CD8-positive, alpha-beta T cell (primary cell): ENCODE measurements at regions of chr2 and their contacts with region 1.

Region 1: GRCh38 chr2:12326449-12327190 is 390.1 kb upstream of the TRIB2 start:
- DNase-seq: peak in 3 of 9 experiments; percentile 10 to 46 (median 20)
- ATAC-seq: no peak
- H3K4me3 ChIP-seq: no peak overlapping the region
- H3K4me3 Mint-ChIP-seq: no peak overlapping the region
- H3K27ac ChIP-seq: no peak overlapping the region
- H3K27ac Mint-ChIP-seq: no peak overlapping the region
- H3K4me1 ChIP-seq: no peaks in the 10 kb centered on the region
- H3K4me1 Mint-ChIP-seq: no peaks in the 10 kb centered on the region
- H3K27me3 ChIP-seq: no peaks in the 10 kb centered on the region
- H3K27me3 Mint-ChIP-seq: no peaks in the 10 kb centered on the region
- CTCF ChIP-seq: no peak

Region 2: GRCh38 chr2:11829947-11830707 is 496.5 kb before region 1 on chr2:
- CTCF ChIA-PET with region 1: no interaction called
- POLR2A ChIA-PET with region 1: interaction called, 3 read pairs
- intact Hi-C with region 1: loop called in 1 of 2 experiments (anchors 1 kb)
- DNase-seq: peak in 8 of 9 experiments; percentile 21 to 77 (median 51)
- ATAC-seq: peak; percentile 78
- H3K4me3 ChIP-seq: peak overlapping the region; percentile 27 to 40
- H3K4me3 Mint-ChIP-seq: peak overlapping the region; percentile 78
- H3K27ac ChIP-seq: no peak overlapping the region
- H3K27ac Mint-ChIP-seq: peak overlapping the region; percentile 42
- H3K4me1 ChIP-seq: peaks cover 28% of the 10 kb centered on the region
- H3K4me1 Mint-ChIP-seq: peaks cover 45% of the 10 kb centered on the region
- H3K27me3 ChIP-seq: no peaks in the 10 kb centered on the region
- H3K27me3 Mint-ChIP-seq: no peaks in the 10 kb centered on the region
- CTCF ChIP-seq: no peak